Left colon (tissue), 2 donors: ENCODE measurements at regions of chr12 and their contacts with region 1.

Region 1: GRCh38 chr12:13211859-13212664 is 15.5 kb downstream of the EMP1 start:
- DNase-seq: peak in 1 of 2 donors; percentile 70
- ATAC-seq: peak; percentile 26

Region 2: DNA sequence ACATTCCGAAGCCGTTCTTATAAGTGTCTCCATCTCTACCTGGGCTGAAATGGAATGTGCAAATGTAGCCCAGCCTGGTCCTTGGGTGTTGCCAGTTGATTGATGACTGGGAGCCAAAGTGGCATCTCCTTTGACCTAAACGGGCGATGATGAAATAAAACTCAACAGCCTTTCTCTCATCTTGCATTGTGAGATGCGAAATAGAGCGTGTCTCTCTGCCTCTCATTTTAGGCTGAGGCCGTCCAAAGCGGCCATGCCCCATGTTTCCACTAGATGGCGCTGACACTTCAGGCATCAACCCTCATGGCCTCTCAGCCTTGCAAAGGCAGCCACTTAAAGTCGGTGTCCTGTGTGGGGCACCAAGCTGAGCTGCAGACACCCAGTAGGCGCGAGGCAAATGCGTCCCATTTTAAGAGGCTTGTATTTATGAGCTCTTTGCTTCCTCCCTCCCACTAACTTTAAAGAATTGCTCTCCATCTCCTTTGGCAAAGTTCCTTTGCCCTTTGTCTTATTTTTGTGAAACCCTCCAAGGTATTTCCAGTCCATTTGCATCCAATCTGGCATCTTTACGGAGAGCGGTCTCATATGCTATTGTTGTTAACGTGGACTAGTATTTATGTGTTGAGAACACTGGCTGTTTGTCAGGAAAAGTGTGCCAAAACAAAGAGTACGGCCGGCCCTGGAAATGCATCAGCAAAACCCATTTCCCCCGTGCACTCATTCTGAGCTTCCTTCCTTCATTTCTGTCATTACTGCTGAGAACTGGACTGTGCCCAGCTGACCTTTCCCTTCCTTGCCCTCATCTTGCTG is 295.7 kb before region 1 on chr12:
- intact Hi-C with region 1: loop called (anchors 5 kb)
- DNase-seq: peak; percentile 64 to 87
- ATAC-seq: peak; percentile 81

Region 3: GRCh38 chr12:13094347-13094746 is 117.7 kb before region 1 on chr12:
- intact Hi-C with region 1: loop called (anchors 5 to 10 kb)
- DNase-seq: no peak
- ATAC-seq: no peak

Region 4: GRCh38 chr12:13100882-13101769 is 110.9 kb before region 1 on chr12:
- intact Hi-C with region 1: loop called (anchors 5 to 10 kb)
- DNase-seq: peak; percentile 86 to 91
- ATAC-seq: peak; percentile 82

Region 5: GRCh38 chr12:13114251-13115052 is 97.6 kb before region 1 on chr12:
- intact Hi-C with region 1: no loop called
- DNase-seq: no peak
- ATAC-seq: no peak

Region 6: DNA sequence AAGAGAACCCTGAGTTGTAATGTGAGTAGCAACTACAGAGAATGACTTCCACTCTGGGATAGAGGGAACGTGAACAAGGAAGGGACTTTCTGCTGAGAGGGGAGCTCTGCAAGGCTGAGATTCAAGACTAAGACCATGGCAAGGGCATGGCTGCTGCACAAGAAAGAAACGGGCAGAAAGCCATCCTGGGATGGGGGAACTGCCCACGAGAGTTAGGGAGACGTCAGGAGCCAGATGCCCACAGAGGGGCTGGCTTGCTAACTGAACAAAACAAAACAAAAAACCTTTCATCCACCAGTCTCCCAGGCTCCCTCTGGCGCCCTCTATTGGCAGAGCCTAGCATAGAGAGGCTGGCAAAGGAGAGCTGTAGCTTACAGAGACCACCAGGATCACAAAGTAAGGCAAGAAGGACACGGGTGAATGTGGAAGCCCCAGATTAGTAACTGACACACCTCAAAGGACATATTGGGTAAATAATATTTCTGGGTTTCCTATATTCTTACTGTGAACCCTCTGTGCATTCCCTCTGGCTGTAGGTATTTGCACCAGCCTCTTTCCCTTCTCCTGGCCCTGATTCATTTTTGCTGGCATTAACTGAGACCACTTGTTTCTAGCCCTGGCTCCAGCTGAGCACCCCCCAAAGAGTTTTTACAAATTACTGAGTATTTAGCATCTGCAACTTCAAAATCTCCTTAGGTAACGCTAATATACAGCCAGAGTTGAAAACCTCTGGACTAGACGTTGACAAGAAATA is 322.8 kb after region 1 on chr12:
- intact Hi-C with region 1: no loop called
- DNase-seq: peak; percentile 41 to 79
- ATAC-seq: no peak